ENCODE measurements at regions of chr17 and their contacts with region 1.

Region 1: DNA sequence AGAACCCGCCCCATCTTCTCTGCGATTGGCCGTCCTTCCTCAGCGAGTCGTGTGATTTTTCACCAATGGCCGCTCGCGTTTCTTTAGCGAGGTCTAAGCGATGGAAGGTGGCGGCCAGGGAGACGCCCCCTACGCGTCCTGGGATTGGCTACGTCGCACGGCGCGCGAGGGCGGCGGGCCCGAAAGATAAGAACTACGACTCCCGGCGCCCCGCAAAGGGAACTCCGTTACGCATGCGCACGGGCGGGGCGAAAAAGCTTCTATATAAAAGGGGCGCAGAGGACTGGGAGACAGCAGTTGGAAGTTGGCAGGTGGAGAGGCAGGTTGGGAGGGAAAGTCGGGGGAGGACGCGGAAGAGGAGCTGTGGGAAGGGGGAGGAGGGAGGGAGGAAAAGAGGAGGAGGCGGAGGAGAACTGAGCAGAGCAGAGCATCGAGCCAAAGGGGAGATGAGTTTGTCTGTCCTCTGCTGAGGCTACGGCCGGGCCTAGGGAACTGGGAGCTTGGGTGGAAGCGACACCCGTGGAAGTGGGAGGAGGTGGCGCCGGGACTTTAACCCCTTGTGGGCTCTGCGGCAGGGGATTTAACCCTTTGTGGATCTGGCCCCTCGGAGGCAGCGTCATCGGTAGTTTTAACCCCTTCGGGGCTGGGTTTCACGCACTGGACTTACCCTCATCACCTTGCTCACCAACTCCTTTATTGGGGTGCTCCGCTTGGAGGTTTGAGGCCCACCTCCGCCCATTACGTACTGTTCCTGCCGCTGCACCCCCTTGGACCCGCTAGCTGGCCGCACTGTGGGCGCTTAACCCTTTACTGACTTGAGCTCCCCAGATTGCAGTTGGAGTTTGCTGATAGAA is at the start of gene HEXIM1:
- DNase-seq: peak; percentile 98 to 100
- H3K4me3 ChIP-seq: peak within 1 kb of the TSS; percentile 77 to 93 (median 88)
- H3K27ac ChIP-seq: peak within 1 kb of the TSS; percentile 99
- H3K4me1 ChIP-seq: peaks cover 3 to 17% (median 13%) of the 10 kb centered on the region in 4 experiments
- H3K27me3 ChIP-seq: no peaks in the 10 kb centered on the region
- CTCF ChIP-seq: no peak
- EP300 ChIP-seq: no peak
- POLR2A ChIP-seq: peak; percentile 99 to 100
- RAD21 ChIP-seq: no peak
- total RNA-seq, gene HEXIM1: 36.9 and 38.3 TPM in 2 replicates

Region 2: GRCh38 chr17:45135192-45135977 is 13.0 kb before region 1 on chr17 and contains the start of gene ACBD4:
- CTCF ChIA-PET with region 1: interaction called, 91 read pairs
- POLR2A ChIA-PET with region 1: interaction called, 185 read pairs
- DNase-seq: peak; percentile 87 to 99
- H3K4me3 ChIP-seq: peak within 1 kb of the TSS; percentile 26 to 65 (median 58)
- H3K27ac ChIP-seq: no peak within 1 kb of the TSS
- H3K4me1 ChIP-seq: peaks cover 0 to 6% (median 2%) of the 10 kb centered on the region in 4 experiments; a peak in 3 of 7 replicates
- H3K27me3 ChIP-seq: no peaks in the 10 kb centered on the region
- CTCF ChIP-seq: peak; percentile 100
- EP300 ChIP-seq: peak in 1 of 2 experiments; percentile 41; a peak in 1 of 3 replicates
- POLR2A ChIP-seq: 0 out of 3 replicates have a peak, but pooled peaks of 1 of the 2 experiments have one; percentile 43
- RAD21 ChIP-seq: peak; percentile 94 to 95
- total RNA-seq, gene ACBD4: 9.3 and 10.7 TPM in 2 replicates

Region 3: DNA sequence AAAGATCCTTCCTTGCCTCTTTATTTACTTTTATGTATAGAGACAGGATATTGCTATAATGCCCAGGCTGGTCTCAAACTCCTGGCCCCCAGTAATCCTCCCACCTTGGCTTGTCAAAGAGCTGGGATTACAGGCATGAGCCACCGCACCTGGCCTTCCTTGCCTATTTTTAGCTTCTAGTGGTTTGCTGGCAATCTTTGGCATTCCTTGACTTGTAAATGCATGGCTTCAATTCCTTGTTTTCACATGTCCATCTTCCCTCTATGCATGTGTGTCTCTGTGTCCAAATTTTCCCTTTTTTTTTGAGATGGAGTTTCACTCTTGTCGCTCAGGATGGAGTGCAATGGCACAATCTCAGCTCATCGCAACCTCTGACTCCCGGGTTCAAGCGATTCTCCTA is 35.7 kb after region 1 on chr17:
- CTCF ChIA-PET with region 1: interaction called, 13 read pairs
- POLR2A ChIA-PET with region 1: interaction called, 1,076 read pairs
- DNase-seq: no peak
- H3K4me3 ChIP-seq: no peak overlapping the region
- H3K27ac ChIP-seq: no peak overlapping the region
- H3K4me1 ChIP-seq: peaks cover 0 to 3% (median 0%) of the 10 kb centered on the region in 4 experiments; a peak in 2 of 7 replicates
- H3K27me3 ChIP-seq: no peaks in the 10 kb centered on the region
- CTCF ChIP-seq: no peak
- EP300 ChIP-seq: no peak
- POLR2A ChIP-seq: no peak
- RAD21 ChIP-seq: no peak

Region 4: GRCh38 chr17:45218895-45219661 is 70.7 kb after region 1 on chr17:
- CTCF ChIA-PET with region 1: interaction called, 24 read pairs
- POLR2A ChIA-PET with region 1: interaction called, 54 read pairs
- DNase-seq: peak in 1 of 2 experiments; percentile 99
- H3K4me3 ChIP-seq: no peak overlapping the region
- H3K27ac ChIP-seq: no peak overlapping the region
- H3K4me1 ChIP-seq: peaks cover 0 to 9% (median 3%) of the 10 kb centered on the region in 4 experiments; a peak in 3 of 7 replicates
- H3K27me3 ChIP-seq: peaks cover 15 to 42% (median 35%) of the 10 kb centered on the region in 4 experiments
- CTCF ChIP-seq: peak; percentile 94 to 97 (median 97)
- EP300 ChIP-seq: no peak
- POLR2A ChIP-seq: no peak
- RAD21 ChIP-seq: peak; percentile 96 to 97

Region 5: DNA sequence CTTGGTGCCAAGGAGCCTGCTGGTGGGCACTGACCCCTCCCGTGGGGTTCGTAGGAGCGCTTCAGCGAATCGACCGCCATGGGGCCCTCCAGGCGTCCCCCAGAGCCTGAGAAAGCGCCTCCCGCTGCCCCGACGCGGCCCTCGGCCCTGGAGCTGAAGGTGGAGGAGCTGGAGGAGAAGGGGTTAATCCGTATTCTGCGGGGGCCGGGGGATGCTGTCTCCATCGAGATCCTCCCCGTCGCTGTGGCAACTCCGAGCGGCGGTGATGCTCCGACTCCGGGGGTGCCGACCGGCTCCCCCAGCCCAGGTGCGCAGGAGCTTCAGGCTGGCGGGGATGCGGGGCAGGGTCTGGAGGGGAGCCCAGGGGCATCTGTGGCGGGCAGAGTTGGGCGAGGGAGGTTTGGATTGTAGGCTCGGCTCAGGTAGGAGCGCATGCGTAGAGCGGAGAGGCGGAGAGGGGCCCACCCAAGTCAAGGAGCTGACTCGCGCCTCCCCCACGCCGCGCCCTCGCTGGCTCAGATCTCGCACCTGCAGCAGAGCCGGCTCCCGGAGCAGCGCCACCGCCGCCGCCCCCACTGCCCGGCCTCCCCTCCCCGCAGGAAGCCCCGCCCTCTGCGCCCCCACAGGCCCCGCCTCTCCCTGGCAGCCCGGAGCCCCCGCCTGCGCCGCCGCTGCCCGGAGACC is 93.1 kb after region 1 on chr17:
- CTCF ChIA-PET with region 1: interaction called, 12 read pairs
- POLR2A ChIA-PET with region 1: interaction called, 24 read pairs
- DNase-seq: peak in 1 of 2 experiments; percentile 84
- H3K4me3 ChIP-seq: peak overlapping the region; percentile 54 to 73 (median 60)
- H3K27ac ChIP-seq: no peak overlapping the region
- H3K4me1 ChIP-seq: peaks cover 0 to 18% (median 13%) of the 10 kb centered on the region in 4 experiments; a peak in 6 of 7 replicates
- H3K27me3 ChIP-seq: peaks cover 0 to 25% (median 18%) of the 10 kb centered on the region in 4 experiments; a peak in 6 of 7 replicates
- CTCF ChIP-seq: no peak
- EP300 ChIP-seq: no peak
- POLR2A ChIP-seq: no peak
- RAD21 ChIP-seq: no peak

Measured in H1 (cell line).